WTC11 (cell line): ENCODE measurements at regions of chr4 and their contacts with region 1.

Region 1: GRCh38 chr4:13430834-13431568 is 53.1 kb downstream of the RAB28 start:
- DNase-seq: no peak
- ATAC-seq: peak; percentile 89
- H3K4me3 Mint-ChIP-seq: no peak overlapping the region
- H3K27ac Mint-ChIP-seq: peak overlapping the region; percentile 53; the same call in 1 of the 2 replicates
- H3K4me1 Mint-ChIP-seq: peaks cover 39% of the 10 kb centered on the region
- H3K27me3 Mint-ChIP-seq: no peaks in the 10 kb centered on the region
- CTCF ChIP-seq: peak; percentile 73

Region 2: DNA sequence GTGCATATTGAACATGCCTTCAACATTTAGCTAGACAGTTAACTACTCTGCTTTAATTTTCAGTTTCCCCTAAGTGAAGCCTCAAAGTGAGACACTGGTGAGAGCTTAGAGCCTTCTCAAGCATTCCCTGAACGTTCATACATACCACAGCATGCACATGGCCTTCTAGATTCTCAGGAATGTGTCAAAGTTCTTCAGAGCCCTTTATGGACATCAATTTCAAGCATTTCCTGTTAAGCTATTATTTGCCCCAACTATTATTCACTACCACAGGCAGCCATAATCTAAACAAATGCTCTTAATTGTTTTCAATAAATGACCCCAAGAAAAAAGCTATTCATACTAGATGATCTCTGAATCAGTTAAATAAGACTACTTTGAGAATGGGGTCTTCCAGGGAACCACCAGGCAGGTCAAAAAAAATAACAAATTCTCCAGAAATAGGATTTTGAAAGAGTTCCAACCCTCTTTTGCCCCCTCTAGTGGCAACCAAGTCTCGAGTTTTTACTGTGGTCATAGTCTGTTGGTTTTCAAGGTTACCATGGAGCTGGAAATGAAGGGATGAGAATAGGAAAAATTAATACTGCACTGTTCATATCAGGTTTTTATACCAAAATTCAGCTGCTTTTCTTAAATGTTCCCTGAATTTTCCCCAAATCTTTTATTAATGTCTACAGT is 182.2 kb before region 1 on chr4:
- CTCF ChIA-PET with region 1: interaction called, 10 read pairs
- POLR2A ChIA-PET with region 1: no interaction called
- DNase-seq: no peak
- ATAC-seq: no peak
- H3K4me3 Mint-ChIP-seq: no peak overlapping the region
- H3K27ac Mint-ChIP-seq: no peak overlapping the region
- H3K4me1 Mint-ChIP-seq: peaks cover 14% of the 10 kb centered on the region
- H3K27me3 Mint-ChIP-seq: no peaks in the 10 kb centered on the region
- CTCF ChIP-seq: peak; percentile 15; the same call in 1 of the 2 replicates

Region 3: GRCh38 chr4:13441506-13441905 is 10.5 kb after region 1 on chr4:
- CTCF ChIA-PET with region 1: interaction called, 24 read pairs
- POLR2A ChIA-PET with region 1: no interaction called
- DNase-seq: no peak
- ATAC-seq: no peak
- H3K4me3 Mint-ChIP-seq: no peak overlapping the region
- H3K27ac Mint-ChIP-seq: no peak overlapping the region
- H3K4me1 Mint-ChIP-seq: peaks cover 10% of the 10 kb centered on the region
- H3K27me3 Mint-ChIP-seq: no peaks in the 10 kb centered on the region
- CTCF ChIP-seq: no peak

Region 4: GRCh38 chr4:13464543-13464942 is 33.5 kb after region 1 on chr4:
- CTCF ChIA-PET with region 1: interaction called, 11 read pairs
- POLR2A ChIA-PET with region 1: no interaction called
- DNase-seq: no peak
- ATAC-seq: no peak
- H3K4me3 Mint-ChIP-seq: no peak overlapping the region
- H3K27ac Mint-ChIP-seq: no peak overlapping the region
- H3K4me1 Mint-ChIP-seq: peaks cover 10% of the 10 kb centered on the region
- H3K27me3 Mint-ChIP-seq: no peaks in the 10 kb centered on the region
- CTCF ChIP-seq: no peak

Region 5: GRCh38 chr4:13527981-13528820 is 97.2 kb after region 1 on chr4:
- CTCF ChIA-PET with region 1: interaction called, 11 read pairs
- POLR2A ChIA-PET with region 1: no interaction called
- DNase-seq: no peak
- ATAC-seq: no peak
- H3K4me3 Mint-ChIP-seq: peak overlapping the region; percentile 50
- H3K27ac Mint-ChIP-seq: no peak overlapping the region
- H3K4me1 Mint-ChIP-seq: peaks cover 72% of the 10 kb centered on the region
- H3K27me3 Mint-ChIP-seq: peaks cover 100% of the 10 kb centered on the region
- CTCF ChIP-seq: no peak